ENCODE measurements at regions of chrX and their contacts with region 1.

Region 1: GRCh38 chrX:97685753-97686152 is 802.0 kb downstream of the RPA4 start:
- DNase-seq: peak in 2 of 9 donors; percentile 3 to 8
- ATAC-seq: no peak
- H3K4me3 ChIP-seq: no peak overlapping the region
- H3K4me3 Mint-ChIP-seq: no peak overlapping the region
- H3K27ac ChIP-seq: no peak overlapping the region
- H3K27ac Mint-ChIP-seq: no peak overlapping the region
- H3K4me1 ChIP-seq: no peaks in the 10 kb centered on the region
- H3K4me1 Mint-ChIP-seq: no peaks in the 10 kb centered on the region
- H3K27me3 ChIP-seq: no peaks in the 10 kb centered on the region
- H3K27me3 Mint-ChIP-seq: peaks cover 0 to 6% (median 2%) of the 10 kb centered on the region in 5 donors

Region 2: GRCh38 chrX:96372313-96373046 is 1313.3 kb before region 1 on chrX:
- CTCF ChIA-PET with region 1: no interaction called
- POLR2A ChIA-PET with region 1: no interaction called
- intact Hi-C with region 1: loop called in 1 of 2 experiments (anchors 10 kb)
- DNase-seq: no peak
- ATAC-seq: no peak
- H3K4me3 ChIP-seq: no peak overlapping the region
- H3K4me3 Mint-ChIP-seq: no peak overlapping the region
- H3K27ac ChIP-seq: no peak overlapping the region
- H3K27ac Mint-ChIP-seq: no peak overlapping the region
- H3K4me1 ChIP-seq: no peaks in the 10 kb centered on the region
- H3K4me1 Mint-ChIP-seq: no peaks in the 10 kb centered on the region
- H3K27me3 ChIP-seq: no peaks in the 10 kb centered on the region
- H3K27me3 Mint-ChIP-seq: no peaks in the 10 kb centered on the region

Region 3: DNA sequence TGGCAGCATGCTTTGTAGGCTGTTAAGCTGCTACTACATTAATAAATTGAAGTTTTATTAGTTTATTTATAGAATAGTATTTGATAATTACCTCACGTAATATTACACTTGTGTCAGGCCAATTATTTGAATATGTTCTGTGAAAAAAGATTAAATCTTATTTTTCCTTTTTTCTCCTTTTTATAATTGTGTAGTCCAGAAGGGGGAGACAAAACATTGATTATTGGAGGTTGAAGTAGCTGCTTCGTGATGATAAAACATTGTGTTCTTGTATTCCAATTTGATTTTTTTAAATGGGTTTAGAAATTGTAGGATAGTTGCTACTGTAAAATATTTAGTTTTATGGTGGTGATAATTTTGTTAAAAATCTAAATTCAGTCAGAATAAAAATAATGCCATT is 915.4 kb before region 1 on chrX:
- CTCF ChIA-PET with region 1: no interaction called
- POLR2A ChIA-PET with region 1: no interaction called
- intact Hi-C with region 1: loop called in 1 of 2 experiments (anchors 2 kb)
- DNase-seq: peak in 2 of 9 donors; percentile 3 to 7
- ATAC-seq: no peak
- H3K4me3 ChIP-seq: no peak overlapping the region
- H3K4me3 Mint-ChIP-seq: no peak overlapping the region
- H3K27ac ChIP-seq: no peak overlapping the region
- H3K27ac Mint-ChIP-seq: no peak overlapping the region
- H3K4me1 ChIP-seq: no peaks in the 10 kb centered on the region
- H3K4me1 Mint-ChIP-seq: peaks cover 0 to 2% (median 0%) of the 10 kb centered on the region in 7 donors
- H3K27me3 ChIP-seq: no peaks in the 10 kb centered on the region
- H3K27me3 Mint-ChIP-seq: no peaks in the 10 kb centered on the region

Region 4: DNA sequence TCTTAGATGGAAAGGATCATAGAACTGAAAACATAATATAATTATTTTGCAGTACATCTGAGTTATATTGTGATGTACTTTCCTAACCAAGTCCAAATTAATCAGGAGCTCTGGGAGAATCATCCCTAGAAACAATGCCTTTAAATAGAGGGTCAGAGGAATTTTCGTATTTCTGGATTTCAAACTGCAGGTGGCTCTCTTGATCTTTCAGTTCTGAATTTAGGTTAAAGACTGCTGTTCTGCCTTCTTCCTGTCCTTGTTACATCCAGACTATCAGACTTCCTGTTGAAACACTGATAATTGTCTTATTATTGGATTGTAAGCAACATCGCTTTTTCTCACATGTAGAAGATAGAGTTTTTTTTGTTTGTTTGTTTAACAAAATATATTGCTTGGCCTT is 659.3 kb before region 1 on chrX:
- CTCF ChIA-PET with region 1: no interaction called
- POLR2A ChIA-PET with region 1: no interaction called
- intact Hi-C with region 1: loop called in 1 of 2 experiments (anchors 10 kb)
- DNase-seq: no peak
- ATAC-seq: no peak
- H3K4me3 ChIP-seq: no peak overlapping the region
- H3K4me3 Mint-ChIP-seq: no peak overlapping the region
- H3K27ac ChIP-seq: no peak overlapping the region
- H3K27ac Mint-ChIP-seq: no peak overlapping the region
- H3K4me1 ChIP-seq: no peaks in the 10 kb centered on the region
- H3K4me1 Mint-ChIP-seq: peaks cover 0 to 3% (median 0%) of the 10 kb centered on the region in 7 donors
- H3K27me3 ChIP-seq: no peaks in the 10 kb centered on the region
- H3K27me3 Mint-ChIP-seq: no peaks in the 10 kb centered on the region

Region 5: GRCh38 chrX:97290199-97290598 is 395.6 kb before region 1 on chrX:
- CTCF ChIA-PET with region 1: no interaction called
- POLR2A ChIA-PET with region 1: no interaction called
- intact Hi-C with region 1: no loop called
- DNase-seq: no peak
- ATAC-seq: no peak
- H3K4me3 ChIP-seq: no peak overlapping the region
- H3K4me3 Mint-ChIP-seq: no peak overlapping the region
- H3K27ac ChIP-seq: no peak overlapping the region
- H3K27ac Mint-ChIP-seq: no peak overlapping the region
- H3K4me1 ChIP-seq: no peaks in the 10 kb centered on the region
- H3K4me1 Mint-ChIP-seq: no peaks in the 10 kb centered on the region
- H3K27me3 ChIP-seq: no peaks in the 10 kb centered on the region
- H3K27me3 Mint-ChIP-seq: no peaks in the 10 kb centered on the region

Measured in naive thymus-derived CD4-positive, alpha-beta T cell (primary cell).